Right ventricle myocardium superior (tissue), 1 donor: ENCODE measurements at regions of chr10 and their contacts with region 1.

Region 1: GRCh38 chr10:88835096-88835909 is 16.3 kb downstream of the ANKRD22 start:
- DNase-seq: peak; percentile 85
- ATAC-seq: peak; percentile 98

Region 2: GRCh38 chr10:88913127-88913526 is 77.8 kb after region 1 on chr10:
- intact Hi-C with region 1: no loop called
- DNase-seq: no peak
- ATAC-seq: peak; percentile 65

Region 3: DNA sequence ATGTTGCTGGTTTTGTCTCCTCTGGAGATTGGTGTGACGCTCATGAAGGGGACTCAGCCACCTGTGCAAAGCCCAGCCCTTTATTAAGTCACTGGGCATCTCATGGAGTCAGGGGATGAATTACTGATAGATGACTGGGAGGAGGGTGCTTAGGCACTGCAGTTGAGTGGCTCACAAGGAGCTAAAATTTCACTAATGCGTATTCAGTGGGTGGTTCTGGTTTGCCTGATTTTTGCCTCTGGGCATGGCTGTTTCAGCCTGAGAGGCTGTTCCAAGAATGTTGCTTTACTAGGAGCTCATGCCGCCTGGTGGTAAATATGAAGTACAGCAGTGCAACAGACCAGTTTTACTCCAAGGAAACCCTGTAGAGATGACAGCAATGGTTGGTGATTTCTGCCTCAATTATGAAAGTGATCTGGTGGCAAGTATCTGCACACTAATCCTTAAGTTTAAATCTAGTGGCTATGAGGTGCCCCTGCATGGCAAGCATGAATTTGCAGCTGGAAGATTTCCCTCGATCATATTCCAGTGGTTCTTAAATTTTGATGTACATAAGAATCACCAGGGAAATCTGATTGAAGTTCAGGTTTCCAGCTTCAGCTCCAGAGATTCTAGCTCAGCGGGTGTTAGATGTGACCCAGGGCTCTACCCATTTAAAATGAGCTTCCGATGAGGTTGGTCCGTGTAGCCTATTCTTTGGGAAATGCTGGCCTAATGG is 97.4 kb after region 1 on chr10:
- intact Hi-C with region 1: loop called (anchors 2 kb)
- DNase-seq: no peak
- ATAC-seq: peak; percentile 78

Region 4: DNA sequence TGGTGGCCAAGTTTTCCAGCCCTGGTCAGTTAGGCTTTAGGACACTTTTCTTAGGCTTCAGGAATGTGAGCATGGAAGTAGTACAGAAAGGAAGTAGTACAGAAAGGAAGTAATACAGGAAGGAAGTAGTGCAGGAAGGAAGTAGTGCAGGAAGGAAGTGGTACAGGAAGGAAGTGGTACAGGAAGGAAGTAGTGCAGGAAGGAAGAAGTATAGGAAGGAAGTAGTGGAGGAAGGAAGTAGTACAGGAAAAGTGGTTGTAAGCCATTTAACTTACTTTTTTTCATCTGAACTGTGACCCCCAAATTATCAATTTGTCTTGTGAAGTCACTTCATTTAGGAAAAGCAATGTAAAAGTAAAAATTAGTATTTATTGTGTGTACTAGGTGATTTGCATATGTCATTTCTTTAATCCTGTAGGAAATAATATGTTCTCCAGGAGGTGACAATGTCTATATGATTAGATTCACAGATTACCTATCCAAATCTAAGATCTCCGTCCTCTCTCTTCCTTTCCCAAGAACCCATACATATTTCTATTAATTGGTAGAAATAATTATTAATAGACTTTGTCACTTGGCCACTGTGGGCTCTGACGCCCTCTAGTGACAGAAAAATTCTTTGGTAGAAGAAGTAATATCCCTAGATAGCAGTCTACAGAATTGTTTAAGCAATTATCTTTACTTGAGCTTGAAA is 151.4 kb after region 1 on chr10:
- intact Hi-C with region 1: loop called (anchors 5 kb)
- DNase-seq: no peak
- ATAC-seq: no peak

Region 5: DNA sequence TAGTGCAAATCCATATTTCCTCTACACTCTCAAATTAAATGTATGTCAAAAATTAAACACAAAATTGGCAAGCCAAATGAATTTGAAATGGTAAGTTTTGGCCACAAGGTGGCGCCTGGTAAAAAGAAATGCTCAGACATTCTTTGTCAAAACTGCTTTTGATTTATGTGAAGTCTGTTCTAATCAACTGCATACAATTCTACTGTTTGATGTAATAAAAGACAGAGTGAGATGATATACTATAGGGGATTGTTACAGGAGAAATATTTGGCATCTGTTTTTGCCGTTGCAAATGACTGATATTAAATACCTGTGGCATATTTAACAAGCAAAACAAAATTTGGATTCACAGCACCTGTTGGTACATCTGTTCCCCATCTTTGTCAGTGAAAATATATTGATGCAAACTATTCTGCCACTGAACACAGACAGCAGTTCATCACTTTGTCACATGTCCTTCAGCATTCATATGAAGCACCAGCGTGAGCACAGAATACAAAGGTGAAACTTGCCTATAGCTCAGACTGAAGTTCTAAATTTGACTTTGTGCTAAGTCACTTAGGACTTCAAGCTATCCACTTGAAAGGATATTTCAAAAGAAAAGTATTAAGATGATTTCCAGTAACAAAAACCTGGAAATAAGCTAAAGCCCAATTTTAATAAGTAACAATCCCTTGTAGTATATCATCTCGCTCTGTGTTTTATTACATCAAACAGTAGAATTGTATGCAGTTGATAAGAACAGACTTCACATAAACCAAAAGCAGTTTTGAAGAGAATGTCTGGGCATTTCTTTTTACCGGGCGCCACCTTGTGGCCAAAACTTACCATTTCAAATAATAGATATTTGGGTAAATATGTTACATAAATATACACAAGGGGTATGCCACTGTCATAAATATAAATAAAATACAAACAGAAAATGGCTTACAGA is 382.0 kb after region 1 on chr10:
- intact Hi-C with region 1: loop called (anchors 10 kb)
- DNase-seq: no peak
- ATAC-seq: peak; percentile 70